Activated CD4-positive, alpha-beta memory T cell treated with anti-CD3 and anti-CD28 coated beads, Interleukin-2, amount 10 ng/mL, durations not matched to agents 7 days and 5 days (primary cell): ENCODE measurements at regions of chr2 and their contacts with region 1.

Region 1: GRCh38 chr2:191020221-191020741 is 6.3 kb upstream of the STAT1 start:
- DNase-seq: peak; percentile 95
- H3K4me3 Mint-ChIP-seq: no peak overlapping the region
- H3K27ac Mint-ChIP-seq: no peak overlapping the region
- H3K4me1 Mint-ChIP-seq: peaks cover 41% of the 10 kb centered on the region
- H3K27me3 Mint-ChIP-seq: no peaks in the 10 kb centered on the region

Region 2: GRCh38 chr2:190887089-190887488 is 133.2 kb before region 1 on chr2:
- CTCF ChIA-PET with region 1: no interaction called
- POLR2A ChIA-PET with region 1: interaction called, 69 read pairs
- DNase-seq: no peak
- H3K4me3 Mint-ChIP-seq: no peak overlapping the region
- H3K27ac Mint-ChIP-seq: no peak overlapping the region
- H3K4me1 Mint-ChIP-seq: peaks cover 64% of the 10 kb centered on the region
- H3K27me3 Mint-ChIP-seq: no peaks in the 10 kb centered on the region

Region 3: DNA sequence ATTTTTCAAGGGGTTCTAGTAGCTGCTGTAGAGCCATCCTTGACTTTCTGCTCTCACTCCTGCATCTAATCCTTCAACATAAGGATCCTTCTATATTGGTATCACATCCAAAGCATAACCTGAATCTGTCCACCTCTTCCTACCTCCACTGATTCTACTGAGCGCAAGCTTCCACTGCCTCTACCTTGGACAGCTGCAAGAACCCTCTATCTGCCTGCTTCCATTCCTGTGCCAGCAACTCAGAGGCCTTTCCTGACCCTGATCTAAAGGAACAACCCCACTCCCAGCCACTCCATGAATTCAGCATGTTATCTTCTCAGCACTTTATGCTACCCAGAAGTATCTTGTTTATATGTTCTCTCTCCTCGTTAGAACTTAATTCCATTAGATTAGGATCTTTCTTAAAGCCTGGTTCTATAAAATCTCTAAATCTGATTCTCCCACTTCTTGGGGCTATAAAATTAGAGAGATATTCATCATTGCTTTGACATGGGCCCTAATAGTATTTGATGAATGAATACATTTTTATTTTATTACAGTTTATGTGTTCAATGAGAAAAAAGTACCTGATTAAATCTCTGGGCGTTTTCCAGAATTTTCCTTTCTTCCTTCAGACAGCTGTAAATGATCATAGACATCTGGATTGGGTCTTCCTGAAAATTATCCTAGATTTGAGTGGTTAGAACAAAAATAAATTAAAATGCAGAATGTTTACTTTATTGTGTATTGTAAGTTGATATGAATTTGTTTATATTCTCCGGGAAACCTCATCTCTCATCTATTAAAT is 13.1 kb before region 1 on chr2:
- CTCF ChIA-PET with region 1: interaction called, 3 read pairs
- POLR2A ChIA-PET with region 1: interaction called, 167 read pairs
- DNase-seq: no peak
- H3K4me3 Mint-ChIP-seq: peak overlapping the region; percentile 2
- H3K27ac Mint-ChIP-seq: no peak overlapping the region
- H3K4me1 Mint-ChIP-seq: peaks cover 87% of the 10 kb centered on the region
- H3K27me3 Mint-ChIP-seq: no peaks in the 10 kb centered on the region

Region 4: DNA sequence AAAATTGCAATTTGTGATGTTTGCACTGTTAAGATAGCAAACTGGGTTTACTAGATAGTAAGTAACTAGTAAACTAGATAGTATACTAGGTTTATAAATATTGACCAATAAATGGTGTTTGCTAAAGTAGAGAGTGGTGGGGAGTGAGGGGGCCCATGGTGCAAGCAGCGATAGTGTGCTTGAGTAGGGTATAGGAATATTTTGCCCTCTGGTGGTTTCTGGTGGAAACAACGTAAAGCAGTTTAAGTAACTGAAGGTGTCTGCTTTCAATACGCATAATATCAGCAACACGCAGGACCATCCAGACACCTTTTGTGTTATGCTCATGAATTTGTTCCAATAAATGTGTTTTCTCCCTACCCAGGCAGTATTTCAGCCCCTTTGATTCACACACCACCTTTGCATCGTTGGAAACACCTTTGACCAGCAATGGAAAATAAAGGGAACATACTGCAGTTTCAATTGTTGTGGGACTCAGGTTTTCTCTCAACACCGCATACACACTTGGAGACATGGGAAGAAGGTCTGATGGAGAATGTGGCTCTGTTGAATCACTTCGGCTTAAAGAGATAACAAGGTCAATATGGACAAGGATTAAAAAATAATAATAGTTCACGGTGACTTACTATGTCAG is 10.4 kb after region 1 on chr2:
- CTCF ChIA-PET with region 1: interaction called, 7 read pairs
- POLR2A ChIA-PET with region 1: interaction called, 167 read pairs
- DNase-seq: peak; percentile 36
- H3K4me3 Mint-ChIP-seq: peak overlapping the region; percentile 7
- H3K27ac Mint-ChIP-seq: peak overlapping the region; percentile 69
- H3K4me1 Mint-ChIP-seq: peaks cover 59% of the 10 kb centered on the region
- H3K27me3 Mint-ChIP-seq: no peaks in the 10 kb centered on the region

Region 5: GRCh38 chr2:191038241-191038725 is 18.0 kb after region 1 on chr2:
- CTCF ChIA-PET with region 1: interaction called, 4 read pairs
- POLR2A ChIA-PET with region 1: interaction called, 34 read pairs
- DNase-seq: peak; percentile 69
- H3K4me3 Mint-ChIP-seq: peak overlapping the region; percentile 29
- H3K27ac Mint-ChIP-seq: peak overlapping the region; percentile 88
- H3K4me1 Mint-ChIP-seq: peaks cover 49% of the 10 kb centered on the region
- H3K27me3 Mint-ChIP-seq: no peaks in the 10 kb centered on the region

Region 6: GRCh38 chr2:191066197-191066918 is 46.1 kb after region 1 on chr2:
- CTCF ChIA-PET with region 1: interaction called, 6 read pairs
- POLR2A ChIA-PET with region 1: interaction called, 76 read pairs
- DNase-seq: peak; percentile 23
- H3K4me3 Mint-ChIP-seq: peak overlapping the region; percentile 80
- H3K27ac Mint-ChIP-seq: peak overlapping the region; percentile 84
- H3K4me1 Mint-ChIP-seq: peaks cover 78% of the 10 kb centered on the region
- H3K27me3 Mint-ChIP-seq: no peaks in the 10 kb centered on the region

Region 7: GRCh38 chr2:191114403-191114886 is 94.2 kb after region 1 on chr2:
- CTCF ChIA-PET with region 1: no interaction called
- POLR2A ChIA-PET with region 1: interaction called, 10 read pairs
- DNase-seq: peak; percentile 39
- H3K4me3 Mint-ChIP-seq: peak overlapping the region; percentile 61
- H3K27ac Mint-ChIP-seq: peak overlapping the region; percentile 94
- H3K4me1 Mint-ChIP-seq: peaks cover 71% of the 10 kb centered on the region
- H3K27me3 Mint-ChIP-seq: no peaks in the 10 kb centered on the region